ENCODE measurements at regions of chr5 and their contacts with region 1.

Region 1: DNA sequence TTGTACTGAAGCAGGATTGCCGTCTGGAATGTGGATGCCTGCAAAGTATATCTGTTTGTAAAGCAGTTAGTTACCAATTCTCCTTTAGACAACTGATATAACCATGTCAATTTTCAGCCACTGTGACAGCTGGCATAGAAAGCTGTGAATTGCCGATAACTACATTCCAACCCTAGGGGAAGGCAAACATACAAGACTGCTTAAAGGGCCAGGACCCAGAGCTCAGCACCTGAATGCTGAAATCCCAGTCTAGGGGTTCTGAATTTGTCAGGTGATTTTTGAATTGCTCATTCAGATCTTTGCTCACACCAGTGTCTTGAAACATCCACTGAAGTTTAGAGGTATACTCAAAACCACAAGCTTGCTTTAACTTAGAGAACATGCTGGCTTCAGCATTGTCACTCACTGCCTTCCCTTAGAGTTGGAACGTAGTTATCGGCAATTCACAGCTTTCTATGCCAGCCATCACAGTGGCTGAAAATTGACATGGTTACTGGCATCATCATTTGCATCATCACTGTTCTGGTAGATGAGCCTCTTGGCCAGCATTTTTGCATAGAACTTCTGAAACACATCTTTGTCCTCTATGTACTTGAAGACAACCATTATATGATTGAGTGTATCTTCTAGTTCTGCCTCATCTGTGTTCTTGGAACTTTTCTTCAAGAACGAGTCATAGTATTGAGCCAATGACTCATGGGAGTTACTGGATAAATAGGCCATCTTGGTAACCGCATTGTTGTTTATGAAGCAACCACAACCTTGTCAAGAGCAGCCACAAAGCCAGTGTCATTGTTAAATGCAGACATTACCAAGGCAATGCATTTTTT is 82.1 kb downstream of the CCDC192 start:
- DNase-seq: peak; percentile 27
- H3K4me3 Mint-ChIP-seq: peak overlapping the region; percentile 38
- H3K27ac Mint-ChIP-seq: peak overlapping the region; percentile 93
- H3K4me1 Mint-ChIP-seq: peaks cover 24% of the 10 kb centered on the region
- H3K27me3 Mint-ChIP-seq: peaks cover 6% of the 10 kb centered on the region

Region 2: DNA sequence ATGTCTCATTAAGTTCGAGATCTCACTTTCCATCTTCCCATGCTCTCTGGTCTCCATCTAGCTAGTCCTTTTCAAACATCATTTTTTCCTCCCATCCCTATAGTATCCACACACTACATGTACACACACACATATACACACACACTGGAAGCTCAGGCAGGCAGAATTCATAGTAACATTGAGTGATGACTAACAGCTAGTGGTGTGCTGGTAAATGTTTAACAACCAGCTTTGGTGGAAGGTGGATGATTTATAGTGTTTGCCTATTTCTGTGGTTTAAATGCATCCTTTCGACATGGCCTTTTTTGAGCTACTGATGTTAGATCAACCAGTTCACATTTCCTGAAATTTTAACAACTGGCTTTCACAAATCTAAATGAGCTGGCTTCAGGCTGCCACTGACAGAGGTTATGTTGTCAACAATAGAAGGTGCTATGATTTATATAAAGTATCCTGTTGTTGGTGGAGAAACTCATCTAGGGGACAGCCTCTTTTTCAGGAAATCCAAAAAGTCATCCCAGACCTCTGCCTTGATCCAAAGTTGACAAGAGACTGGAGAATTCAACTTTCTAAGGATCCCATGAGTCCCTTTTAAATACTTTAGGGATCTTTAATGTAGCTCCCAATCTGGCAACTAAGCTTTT is 35.7 kb after region 1 on chr5:
- intact Hi-C with region 1: loop called (anchors 5 kb)
- DNase-seq: no peak
- H3K4me3 Mint-ChIP-seq: no peak overlapping the region
- H3K27ac Mint-ChIP-seq: no peak overlapping the region
- H3K4me1 Mint-ChIP-seq: peaks cover 5% of the 10 kb centered on the region
- H3K27me3 Mint-ChIP-seq: peaks cover 5% of the 10 kb centered on the region

Region 3: DNA sequence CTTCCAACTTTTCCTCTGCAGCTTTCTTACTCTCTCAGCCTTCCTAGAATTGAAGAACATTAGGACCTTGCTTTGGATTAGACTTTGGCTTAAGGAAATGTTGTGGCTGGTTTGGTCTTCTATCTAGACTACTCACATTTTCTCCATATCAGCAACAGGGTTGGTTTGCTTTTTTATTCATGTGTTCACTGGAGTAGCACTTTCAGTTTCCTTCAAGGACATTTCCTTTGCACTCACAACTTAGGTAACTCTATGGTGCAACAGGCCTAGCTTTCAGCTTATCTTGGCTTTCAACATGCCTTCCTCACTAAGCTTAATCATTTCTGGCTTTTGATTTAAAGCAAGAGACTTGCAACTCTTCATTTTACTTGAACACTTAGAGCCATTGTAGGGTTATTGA is 71.0 kb after region 1 on chr5:
- intact Hi-C with region 1: loop called (anchors 5 kb)
- DNase-seq: no peak
- H3K4me3 Mint-ChIP-seq: no peak overlapping the region
- H3K27ac Mint-ChIP-seq: peak overlapping the region; percentile 14
- H3K4me1 Mint-ChIP-seq: peaks cover 12% of the 10 kb centered on the region
- H3K27me3 Mint-ChIP-seq: peaks cover 11% of the 10 kb centered on the region

Region 4: GRCh38 chr5:127898551-127899213 is 113.4 kb after region 1 on chr5:
- intact Hi-C with region 1: loop called (anchors 2 kb)
- DNase-seq: no peak
- H3K4me3 Mint-ChIP-seq: no peak overlapping the region
- H3K27ac Mint-ChIP-seq: no peak overlapping the region
- H3K4me1 Mint-ChIP-seq: peaks cover 3% of the 10 kb centered on the region
- H3K27me3 Mint-ChIP-seq: peaks cover 3% of the 10 kb centered on the region